Naive thymus-derived CD4-positive, alpha-beta T cell (primary cell): ENCODE measurements at regions of chr9 and their contacts with region 1.

Region 1: GRCh38 chr9:92790542-92791527 is 26.2 kb upstream of the BICD2 start:
- DNase-seq: peak; percentile 53 to 79 (median 70)
- ATAC-seq: peak; percentile 97
- H3K4me3 ChIP-seq: no peak overlapping the region
- H3K4me3 Mint-ChIP-seq: peak overlapping the region in 1 of 10 donors; percentile 4
- H3K27ac ChIP-seq: no peak overlapping the region
- H3K27ac Mint-ChIP-seq: peak overlapping the region in 2 of 9 donors; percentile 37 to 78
- H3K4me1 ChIP-seq: no peaks in the 10 kb centered on the region
- H3K4me1 Mint-ChIP-seq: peaks cover 2 to 11% (median 7%) of the 10 kb centered on the region in 7 donors
- H3K27me3 ChIP-seq: no peaks in the 10 kb centered on the region
- H3K27me3 Mint-ChIP-seq: peaks cover 0 to 13% (median 6%) of the 10 kb centered on the region in 5 donors

Region 2: DNA sequence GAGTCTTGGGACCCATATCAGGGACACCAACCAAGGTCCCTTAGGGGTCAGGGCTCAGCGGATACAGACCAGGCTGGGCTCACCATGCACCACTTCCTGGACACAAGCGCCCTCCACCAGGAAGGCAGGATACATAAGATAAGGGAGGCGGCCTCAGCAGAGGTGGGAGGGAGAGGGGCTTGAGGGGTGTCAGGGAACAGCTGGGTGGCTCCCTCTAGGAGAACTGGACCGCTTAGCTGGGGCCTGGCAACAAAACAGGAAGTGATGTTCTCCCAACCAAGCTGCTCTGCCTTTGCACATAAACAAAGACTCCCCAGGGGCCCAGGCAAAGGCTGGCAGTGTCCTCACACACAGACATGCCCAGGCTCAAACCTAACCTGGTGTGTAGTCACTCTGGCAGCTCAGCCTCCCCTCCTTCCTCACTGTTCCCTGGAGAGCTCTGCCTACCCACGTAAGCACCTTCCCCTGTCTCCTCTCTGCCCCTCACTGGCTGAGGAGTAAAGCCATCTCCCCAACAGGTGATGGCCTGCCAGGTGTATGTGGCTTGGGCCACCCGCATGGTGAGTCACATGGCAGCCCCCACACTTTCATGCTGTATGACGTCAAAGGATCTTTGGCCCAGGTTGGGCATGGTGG is 20.4 kb before region 1 on chr9:
- CTCF ChIA-PET with region 1: interaction called, 12 read pairs
- POLR2A ChIA-PET with region 1: interaction called, 4 read pairs
- intact Hi-C with region 1: loop called (anchors 1 kb)
- DNase-seq: no peak
- ATAC-seq: peak; percentile 55
- H3K4me3 ChIP-seq: no peak overlapping the region
- H3K4me3 Mint-ChIP-seq: peak overlapping the region in 6 of 10 donors; percentile 11 to 45 (median 27)
- H3K27ac ChIP-seq: peak overlapping the region; percentile 22
- H3K27ac Mint-ChIP-seq: peak overlapping the region; percentile 53 to 89 (median 81)
- H3K4me1 ChIP-seq: peaks cover 7 to 26% of the 10 kb centered on the region in 2 donors
- H3K4me1 Mint-ChIP-seq: peaks cover 17 to 36% (median 30%) of the 10 kb centered on the region in 7 donors
- H3K27me3 ChIP-seq: no peaks in the 10 kb centered on the region
- H3K27me3 Mint-ChIP-seq: peaks cover 0 to 5% (median 0%) of the 10 kb centered on the region in 5 donors